Tibial artery (tissue), 4 donors: ENCODE measurements at regions of chr17 and their contacts with region 1.

Region 1: DNA sequence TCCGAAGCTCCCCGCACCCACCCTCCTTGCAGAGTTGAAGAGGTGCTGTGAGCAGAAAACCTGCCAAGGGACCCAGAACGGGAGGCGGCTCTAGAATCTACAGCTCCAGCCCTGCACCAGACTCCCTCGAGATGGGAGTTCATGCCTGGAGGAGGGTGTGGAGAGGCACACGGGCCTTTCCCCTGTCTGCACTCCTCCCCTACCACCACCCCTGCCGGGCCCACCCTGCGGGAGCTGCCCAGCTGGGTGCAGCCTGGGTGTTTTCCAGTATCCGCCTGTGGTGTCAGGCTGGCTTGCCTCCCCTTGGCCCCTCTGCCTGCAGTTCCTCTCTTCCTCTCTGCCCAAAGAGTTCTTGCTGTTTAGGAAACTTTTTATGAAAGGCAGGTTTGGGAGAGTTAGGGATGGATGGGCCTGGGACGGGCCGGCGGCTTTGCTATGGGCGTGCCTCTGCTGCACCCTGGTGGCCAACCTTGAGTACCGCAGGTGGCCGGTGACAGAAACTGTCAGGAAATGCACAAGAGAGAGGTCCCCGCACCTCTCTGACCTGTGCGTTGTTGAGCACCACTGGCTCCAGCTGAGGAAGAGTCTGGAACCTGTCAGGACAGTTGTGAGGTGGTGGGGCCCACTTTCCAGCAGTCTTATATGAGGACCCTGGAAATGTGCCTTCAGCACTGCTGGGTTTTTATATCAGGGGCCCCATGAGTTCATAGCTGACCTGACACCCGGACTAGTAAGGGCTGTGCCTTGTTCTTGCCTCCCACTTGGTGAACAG is 354.1 kb downstream of the SEC14L1 start:
- DNase-seq: peak; percentile 86 to 87
- H3K4me3 ChIP-seq: no peak overlapping the region
- H3K27ac ChIP-seq: no peak overlapping the region
- H3K4me1 ChIP-seq: peaks cover 5 to 19% (median 15%) of the 10 kb centered on the region in 4 donors
- H3K27me3 ChIP-seq: no peaks in the 10 kb centered on the region
- CTCF ChIP-seq: peak; percentile 97 to 99

Region 2: GRCh38 chr17:77330602-77331081 is 164.2 kb before region 1 on chr17:
- intact Hi-C with region 1: loop called (anchors 1 kb)
- DNase-seq: peak in 1 of 2 donors; percentile 63
- H3K4me3 ChIP-seq: no peak overlapping the region
- H3K27ac ChIP-seq: no peak overlapping the region
- H3K4me1 ChIP-seq: peaks cover 0 to 23% (median 16%) of the 10 kb centered on the region in 4 donors
- H3K27me3 ChIP-seq: no peaks in the 10 kb centered on the region
- CTCF ChIP-seq: no peak